Transverse colon (tissue), 4 donors: ENCODE measurements at regions of chr13 and their contacts with region 1.

Region 1: DNA sequence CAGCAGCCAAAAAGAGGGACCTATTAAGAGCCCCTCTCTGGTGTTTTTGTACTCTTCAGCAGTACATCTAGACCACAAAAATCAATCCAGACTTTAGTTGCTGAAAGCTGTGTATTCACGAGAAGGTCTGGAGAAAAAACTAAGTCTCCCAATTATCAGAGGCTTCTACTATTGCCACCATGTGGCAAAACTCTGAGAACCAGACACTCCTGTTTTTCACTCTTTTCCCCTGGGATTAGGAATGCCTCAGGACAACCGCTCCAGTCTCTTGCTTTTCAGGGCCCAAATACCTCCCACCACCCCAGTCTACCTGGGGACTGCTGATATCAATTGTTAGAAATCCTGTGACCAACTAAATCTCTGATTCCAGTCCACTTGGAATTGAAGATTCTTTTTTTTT is 30.1 kb upstream of the OBI1 start:
- DNase-seq: no peak
- H3K4me3 ChIP-seq: no peak overlapping the region
- H3K27ac ChIP-seq: no peak overlapping the region
- H3K4me1 ChIP-seq: no peaks in the 10 kb centered on the region
- H3K27me3 ChIP-seq: no peaks in the 10 kb centered on the region
- CTCF ChIP-seq: no peak
- EP300 ChIP-seq: no peak
- POLR2A ChIP-seq: no peak

Region 2: GRCh38 chr13:78743972-78744371 is 55.0 kb after region 1 on chr13:
- in situ Hi-C with region 1: no loop called
- intact Hi-C with region 1: loop called (anchors 2 kb)
- DNase-seq: no peak
- H3K4me3 ChIP-seq: no peak overlapping the region
- H3K27ac ChIP-seq: no peak overlapping the region
- H3K4me1 ChIP-seq: no peaks in the 10 kb centered on the region
- H3K27me3 ChIP-seq: no peaks in the 10 kb centered on the region
- CTCF ChIP-seq: no peak
- EP300 ChIP-seq: no peak
- POLR2A ChIP-seq: no peak